GM18951 (cell line): ENCODE measurements at regions of chr11 and their contacts with region 1.

Region 1: GRCh38 chr11:69642913-69643632 is 2.1 kb downstream of the CCND1 start:
- POLR2A ChIP-seq: no peak

Region 2: DNA sequence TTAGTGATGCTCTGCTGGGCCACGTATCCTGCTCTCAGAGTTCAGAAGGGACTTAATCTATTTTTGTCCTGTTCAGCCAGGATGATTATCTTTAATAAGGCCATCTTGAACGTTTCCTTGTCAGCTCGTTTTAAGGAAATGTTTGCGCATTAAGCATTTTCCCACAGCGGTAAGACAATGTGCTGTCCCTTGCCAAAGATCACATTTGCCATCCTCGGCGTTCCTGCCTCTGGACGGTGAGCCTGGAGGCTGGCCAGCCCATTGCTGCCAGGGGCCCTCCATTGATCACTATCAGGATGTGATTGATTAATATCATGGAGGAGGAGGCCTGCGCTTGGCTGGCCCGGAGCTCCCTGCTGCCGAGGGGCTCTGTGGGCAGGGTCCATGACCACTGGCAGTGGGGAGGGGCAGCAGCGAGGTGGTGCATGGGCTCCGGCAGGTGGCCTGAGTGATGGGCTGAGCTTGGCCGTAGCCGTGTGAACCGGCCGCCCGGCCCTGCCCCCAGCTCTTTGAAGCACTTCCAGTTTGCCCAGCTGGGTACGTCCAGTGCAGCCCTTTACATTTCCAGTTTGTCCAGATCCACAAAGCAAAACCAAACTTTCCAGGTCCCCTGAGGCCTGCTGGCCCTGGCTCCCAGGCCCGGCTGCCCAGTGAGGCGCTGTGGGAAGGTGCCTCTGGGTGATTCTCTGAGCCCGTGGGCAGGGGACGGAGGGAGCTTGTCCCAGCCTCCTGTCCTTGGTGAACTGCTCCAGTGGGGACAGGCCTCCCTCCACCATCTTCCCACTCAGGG is 536.8 kb before region 1 on chr11:
- in situ Hi-C with region 1: loop called (anchors 5 kb)
- POLR2A ChIP-seq: no peak

Region 3: DNA sequence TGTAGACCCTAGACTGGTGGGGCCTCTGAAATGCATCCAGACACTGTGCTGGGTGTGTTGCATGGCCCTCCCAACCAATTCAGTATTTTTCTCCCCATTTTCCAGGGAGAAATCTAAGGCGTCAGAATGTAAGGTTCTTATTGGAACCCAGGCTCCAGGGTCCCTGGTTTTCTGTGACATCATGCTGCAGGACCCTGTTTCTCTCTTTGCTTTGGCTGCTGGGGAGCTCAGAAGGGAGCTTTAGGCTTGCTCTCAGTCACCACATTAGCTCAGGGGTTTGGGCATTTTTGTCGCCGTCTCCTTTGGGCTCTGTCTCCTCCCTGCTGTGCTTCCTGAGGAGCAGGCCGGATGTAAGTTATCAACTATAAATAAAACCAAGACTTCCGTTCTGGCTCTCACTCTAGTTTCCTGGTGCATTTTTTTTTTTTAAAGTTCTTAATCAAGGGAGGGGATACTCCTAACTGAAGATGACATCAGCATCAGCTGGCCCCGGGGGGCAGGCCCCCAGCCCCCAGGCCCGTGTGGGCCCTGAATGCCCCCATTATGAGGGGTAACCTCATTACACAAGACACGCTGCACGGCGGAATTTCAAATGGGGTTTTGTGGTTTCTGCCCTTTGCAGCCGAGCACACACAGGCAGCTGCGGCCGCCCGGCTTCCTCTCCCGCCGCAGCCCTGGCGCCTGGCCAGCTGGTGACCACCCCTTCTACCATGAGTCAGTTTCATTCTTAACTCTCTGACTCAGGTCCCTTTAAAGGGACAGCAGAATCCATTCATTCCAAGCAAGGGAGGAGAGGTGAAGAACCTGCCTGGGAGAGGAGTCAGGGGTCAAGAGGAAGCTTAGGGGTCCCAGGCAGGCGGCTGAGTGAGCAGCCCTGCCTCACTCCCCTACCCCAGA is 345.9 kb before region 1 on chr11:
- in situ Hi-C with region 1: loop called (anchors 25 kb)
- POLR2A ChIP-seq: peak; percentile 17